ENCODE measurements at regions of chr18 and their contacts with region 1.

Region 1: GRCh38 chr18:2932247-2933181 is 80.4 kb downstream of the LPIN2 start:
- DNase-seq: peak in 1 of 3 donors; percentile 85
- ATAC-seq: peak; percentile 71
- H3K4me3 ChIP-seq: no peak overlapping the region
- H3K4me1 ChIP-seq: no peaks in the 10 kb centered on the region
- CTCF ChIP-seq: no peak

Region 2: GRCh38 chr18:2994603-2995432 is 62.3 kb after region 1 on chr18:
- intact Hi-C with region 1: no loop called
- DNase-seq: no peak
- ATAC-seq: peak; percentile 75
- H3K4me3 ChIP-seq: no peak overlapping the region
- H3K4me1 ChIP-seq: peaks cover 12% of the 10 kb centered on the region
- CTCF ChIP-seq: no peak

Region 3: DNA sequence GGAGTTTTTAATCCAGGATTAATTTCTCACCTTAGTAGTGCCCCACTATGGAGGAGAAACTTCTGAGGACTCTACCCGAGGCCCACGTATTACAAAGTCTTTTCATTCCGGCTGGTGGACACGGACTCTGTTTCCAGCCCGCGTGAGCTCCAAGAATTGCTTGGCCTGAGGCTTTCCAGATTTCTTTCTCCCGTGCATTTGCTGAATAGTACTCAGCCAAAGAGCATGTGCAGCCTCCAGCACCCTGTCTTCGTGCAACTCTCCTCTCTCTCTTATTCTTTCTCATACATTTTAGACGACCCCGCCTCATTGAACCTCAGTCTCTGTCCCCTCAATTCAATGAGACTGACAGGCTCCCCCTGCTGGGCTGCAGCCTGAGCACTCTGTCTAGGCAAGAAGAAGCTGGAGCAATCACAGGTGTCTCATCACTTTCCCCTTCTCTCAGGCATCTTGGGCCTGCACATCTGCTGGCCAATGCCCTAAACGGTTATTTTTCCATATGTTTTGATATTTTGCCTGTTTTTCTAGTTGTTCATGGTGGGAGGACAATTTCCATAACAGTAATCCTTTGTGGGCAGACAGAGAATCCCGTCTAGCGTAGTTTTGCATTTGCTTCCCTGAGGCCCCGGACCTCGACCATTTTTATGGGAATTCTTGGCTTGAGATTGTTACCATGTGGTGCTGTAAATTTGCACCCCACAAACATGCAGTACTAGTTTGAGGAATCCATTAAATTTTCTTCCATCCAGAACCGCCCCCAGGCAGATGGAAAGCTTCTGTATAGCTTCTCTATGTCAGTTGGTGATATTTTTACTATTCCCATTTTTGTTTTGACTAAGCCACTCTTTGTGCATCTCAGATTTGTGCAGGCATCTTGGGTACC is 130.5 kb after region 1 on chr18:
- intact Hi-C with region 1: loop called (anchors 10 kb)
- DNase-seq: peak; percentile 74 to 88 (median 83)
- ATAC-seq: peak; percentile 67
- H3K4me3 ChIP-seq: no peak overlapping the region
- H3K4me1 ChIP-seq: peaks cover 5% of the 10 kb centered on the region
- CTCF ChIP-seq: peak; percentile 59

Region 4: GRCh38 chr18:3151399-3152264 is 219.1 kb after region 1 on chr18:
- intact Hi-C with region 1: loop called (anchors 10 kb)
- DNase-seq: peak in 1 of 3 donors; percentile 19
- ATAC-seq: peak; percentile 60
- H3K4me3 ChIP-seq: no peak overlapping the region
- H3K4me1 ChIP-seq: no peaks in the 10 kb centered on the region
- CTCF ChIP-seq: peak; percentile 39

Region 5: DNA sequence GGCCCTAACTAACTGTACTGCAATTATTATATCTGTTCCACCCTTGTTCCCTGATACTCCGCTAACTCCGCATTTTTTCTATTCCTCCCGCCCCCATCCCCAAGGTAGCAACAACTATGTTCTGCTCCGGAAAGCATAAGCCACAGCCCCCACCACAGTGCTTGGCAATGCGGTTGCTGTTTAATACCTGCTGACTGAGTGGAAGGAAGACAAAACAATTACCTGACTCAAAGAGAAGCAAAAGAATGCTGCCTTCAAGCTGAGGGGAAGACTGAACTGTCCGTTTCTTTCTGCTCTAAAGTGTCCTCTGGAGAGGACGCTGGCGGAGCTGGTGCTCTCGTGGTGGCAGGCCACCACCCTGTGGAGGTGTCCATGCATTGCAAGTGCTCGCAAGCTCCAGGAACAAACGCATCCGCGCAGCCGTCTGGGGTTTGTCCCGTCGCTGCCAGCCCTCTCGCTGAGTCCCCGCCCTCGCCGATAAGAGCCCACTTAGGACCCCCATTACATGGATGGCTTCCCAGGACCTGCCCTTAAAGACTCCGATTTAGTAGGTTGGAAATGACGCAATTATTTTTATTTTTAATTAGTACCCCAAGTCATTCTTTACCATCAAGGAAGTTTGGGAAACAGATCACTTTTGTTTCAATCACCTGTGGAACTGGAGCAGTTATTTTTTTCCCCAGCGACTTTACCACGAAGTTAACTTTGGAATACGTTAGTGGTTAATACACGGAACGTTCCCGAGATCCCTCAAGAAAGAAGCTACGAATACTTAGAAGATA is 313.5 kb after region 1 on chr18:
- intact Hi-C with region 1: loop called (anchors 5 to 10 kb)
- DNase-seq: peak; percentile 90 to 95 (median 92)
- ATAC-seq: peak; percentile 77
- H3K4me3 ChIP-seq: no peak overlapping the region
- H3K4me1 ChIP-seq: peaks cover 18% of the 10 kb centered on the region
- CTCF ChIP-seq: peak; percentile 93

Measured in mucosa of descending colon (tissue), 3 donors.